ENCODE measurements at regions of chr12 and their contacts with region 1.

Region 1: GRCh38 chr12:116609319-116610114 is 50.3 kb downstream of the MAP1LC3B2 start:
- DNase-seq: no peak
- H3K4me3 ChIP-seq: no peak overlapping the region
- H3K27ac ChIP-seq: no peak overlapping the region
- H3K4me1 ChIP-seq: peaks cover 0 to 5% (median 3%) of the 10 kb centered on the region in 4 donors
- H3K27me3 ChIP-seq: no peaks in the 10 kb centered on the region
- CTCF ChIP-seq: peak in 2 of 5 experiments; percentile 9 to 10
- EP300 ChIP-seq: no peak
- POLR2A ChIP-seq: no peak

Region 2: DNA sequence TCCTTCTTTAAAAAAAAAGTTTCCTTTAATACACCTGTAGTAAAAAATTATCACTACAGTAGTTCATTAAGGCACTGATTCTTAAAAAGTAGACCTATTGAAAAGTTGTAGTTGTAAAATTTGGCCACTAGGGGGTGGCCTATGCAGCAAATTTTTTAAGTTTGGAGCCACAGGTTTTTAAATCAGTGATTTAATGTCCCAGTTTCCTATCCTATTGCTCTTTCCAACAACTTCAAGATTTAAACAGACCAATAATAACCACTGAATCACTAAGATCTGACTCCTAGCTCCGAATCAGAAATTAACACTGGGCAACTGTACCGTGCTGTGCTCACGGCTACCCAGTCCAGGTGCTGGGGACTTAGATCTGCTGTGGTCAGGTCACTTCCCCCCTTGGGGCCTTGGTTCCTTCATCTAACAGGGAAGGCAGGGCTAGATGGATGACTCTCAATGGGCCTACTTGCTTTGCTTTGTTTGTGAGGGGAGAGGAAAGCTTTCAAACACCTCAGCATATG is 611.3 kb before region 1 on chr12:
- in situ Hi-C with region 1: loop called in 3 of 4 experiments (anchors 5 to 25 kb)
- intact Hi-C with region 1: loop called (anchors 10 kb)
- DNase-seq: peak; percentile 14
- H3K4me3 ChIP-seq: no peak overlapping the region
- H3K27ac ChIP-seq: peak overlapping the region in 2 of 4 donors; percentile 12 to 26
- H3K4me1 ChIP-seq: peaks cover 0 to 17% (median 11%) of the 10 kb centered on the region in 4 donors
- H3K27me3 ChIP-seq: no peaks in the 10 kb centered on the region
- CTCF ChIP-seq: peak; percentile 77 to 85 (median 82)
- EP300 ChIP-seq: no peak
- POLR2A ChIP-seq: no peak

Region 3: DNA sequence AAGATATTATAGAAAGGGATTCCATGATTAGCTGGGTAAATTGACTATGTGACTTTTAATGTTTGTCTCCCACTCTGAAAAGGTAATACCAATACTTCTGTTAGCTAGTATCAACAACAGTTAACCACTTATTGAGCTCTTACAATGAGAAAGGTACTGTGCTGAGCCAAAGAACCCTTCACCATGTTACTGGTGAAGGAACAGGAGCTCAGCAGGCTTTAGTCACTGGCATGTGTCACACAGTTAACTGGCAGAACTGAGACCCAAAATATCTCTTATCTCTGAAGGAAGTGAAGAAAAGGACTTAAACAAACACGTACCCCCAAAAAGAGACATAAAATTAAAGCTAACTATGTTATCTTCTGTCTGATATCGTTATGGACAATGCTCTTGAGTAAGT is 502.6 kb before region 1 on chr12:
- in situ Hi-C with region 1: no loop called
- intact Hi-C with region 1: no loop called
- DNase-seq: no peak
- H3K4me3 ChIP-seq: no peak overlapping the region
- H3K27ac ChIP-seq: no peak overlapping the region
- H3K4me1 ChIP-seq: peaks cover 0 to 14% (median 4%) of the 10 kb centered on the region in 4 donors
- H3K27me3 ChIP-seq: no peaks in the 10 kb centered on the region
- CTCF ChIP-seq: no peak
- EP300 ChIP-seq: no peak
- POLR2A ChIP-seq: no peak

Region 4: DNA sequence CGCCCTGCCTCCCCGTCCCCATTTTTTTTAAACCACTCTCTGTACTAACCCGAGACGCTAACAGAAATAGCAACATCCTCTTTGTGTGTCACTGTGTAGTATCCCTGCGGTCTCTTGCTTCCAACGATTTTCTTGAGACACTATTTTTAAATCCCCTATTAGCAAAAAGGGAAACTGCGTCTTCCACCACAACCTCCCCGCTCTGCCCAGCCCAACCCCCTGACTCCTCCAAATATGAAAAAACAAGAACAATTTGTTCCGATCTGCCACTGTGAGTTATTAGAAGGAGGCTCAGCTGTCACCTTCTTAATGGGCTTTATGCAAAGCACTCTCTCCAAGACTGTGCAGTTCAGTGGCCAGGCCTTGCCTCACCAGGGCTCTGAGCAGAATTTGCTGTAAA is 26.0 kb after region 1 on chr12:
- in situ Hi-C with region 1: no loop called
- intact Hi-C with region 1: loop called (anchors 2 kb)
- DNase-seq: peak; percentile 16
- H3K4me3 ChIP-seq: no peak overlapping the region
- H3K27ac ChIP-seq: peak overlapping the region in 1 of 4 donors; percentile 56
- H3K4me1 ChIP-seq: peaks cover 0 to 21% (median 11%) of the 10 kb centered on the region in 4 donors
- H3K27me3 ChIP-seq: no peaks in the 10 kb centered on the region
- CTCF ChIP-seq: no peak
- EP300 ChIP-seq: no peak
- POLR2A ChIP-seq: no peak